Left ventricle myocardium inferior (tissue), 1 donor: ENCODE measurements at regions of chr11 and their contacts with region 1.

Region 1: GRCh38 chr11:128336203-128336602 is 251.2 kb downstream of the ETS1 start:
- DNase-seq: peak; percentile 50
- H3K4me3 ChIP-seq: no peak overlapping the region
- H3K27ac ChIP-seq: peak overlapping the region; percentile 86
- H3K4me1 ChIP-seq: peaks cover 46% of the 10 kb centered on the region
- H3K27me3 ChIP-seq: no peaks in the 10 kb centered on the region
- CTCF ChIP-seq: no peak

Region 2: DNA sequence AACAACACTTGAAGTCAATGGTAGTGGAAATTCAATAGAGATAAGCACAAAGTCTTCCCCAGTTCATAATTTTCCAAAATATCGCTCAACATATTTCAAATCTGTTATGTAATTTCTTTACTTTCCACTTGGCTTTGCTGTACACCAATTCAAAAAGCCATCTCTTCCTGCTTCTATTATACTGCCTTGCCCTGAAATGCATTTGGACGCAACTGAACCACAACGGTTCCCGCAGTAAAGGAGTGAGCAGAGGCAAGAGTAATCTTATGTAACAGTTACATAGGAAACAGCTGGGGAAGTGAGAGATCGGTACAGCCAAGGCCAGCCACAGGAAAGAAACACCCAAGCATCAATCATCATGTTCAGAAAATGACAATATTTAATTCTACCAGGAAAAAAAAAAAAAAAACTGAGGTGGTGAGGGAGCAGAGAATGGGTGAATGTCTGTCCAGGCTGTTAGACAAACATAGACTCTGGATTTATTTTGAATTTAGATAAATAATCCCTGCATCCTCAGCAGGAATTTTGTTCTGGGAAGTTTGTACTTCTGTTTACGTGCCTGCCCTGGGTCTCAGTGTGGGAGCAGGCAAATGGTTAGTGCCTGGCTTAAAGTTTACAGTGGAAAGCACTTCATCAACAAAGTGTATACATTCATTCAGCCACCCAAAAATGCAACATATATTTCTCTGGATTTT is 141.0 kb before region 1 on chr11:
- intact Hi-C with region 1: no loop called
- DNase-seq: no peak
- H3K4me3 ChIP-seq: no peak overlapping the region
- H3K27ac ChIP-seq: peak overlapping the region; percentile 3
- H3K4me1 ChIP-seq: peaks cover 12% of the 10 kb centered on the region
- H3K27me3 ChIP-seq: no peaks in the 10 kb centered on the region
- CTCF ChIP-seq: peak; percentile 17

Region 3: GRCh38 chr11:128412847-128413791 is 76.9 kb after region 1 on chr11:
- intact Hi-C with region 1: loop called (anchors 10 kb)
- DNase-seq: no peak
- H3K4me3 ChIP-seq: no peak overlapping the region
- H3K27ac ChIP-seq: peak overlapping the region; percentile 64
- H3K4me1 ChIP-seq: peaks cover 30% of the 10 kb centered on the region
- H3K27me3 ChIP-seq: no peaks in the 10 kb centered on the region
- CTCF ChIP-seq: no peak